ENCODE measurements at regions of chr19 and their contacts with region 1.

Region 1: DNA sequence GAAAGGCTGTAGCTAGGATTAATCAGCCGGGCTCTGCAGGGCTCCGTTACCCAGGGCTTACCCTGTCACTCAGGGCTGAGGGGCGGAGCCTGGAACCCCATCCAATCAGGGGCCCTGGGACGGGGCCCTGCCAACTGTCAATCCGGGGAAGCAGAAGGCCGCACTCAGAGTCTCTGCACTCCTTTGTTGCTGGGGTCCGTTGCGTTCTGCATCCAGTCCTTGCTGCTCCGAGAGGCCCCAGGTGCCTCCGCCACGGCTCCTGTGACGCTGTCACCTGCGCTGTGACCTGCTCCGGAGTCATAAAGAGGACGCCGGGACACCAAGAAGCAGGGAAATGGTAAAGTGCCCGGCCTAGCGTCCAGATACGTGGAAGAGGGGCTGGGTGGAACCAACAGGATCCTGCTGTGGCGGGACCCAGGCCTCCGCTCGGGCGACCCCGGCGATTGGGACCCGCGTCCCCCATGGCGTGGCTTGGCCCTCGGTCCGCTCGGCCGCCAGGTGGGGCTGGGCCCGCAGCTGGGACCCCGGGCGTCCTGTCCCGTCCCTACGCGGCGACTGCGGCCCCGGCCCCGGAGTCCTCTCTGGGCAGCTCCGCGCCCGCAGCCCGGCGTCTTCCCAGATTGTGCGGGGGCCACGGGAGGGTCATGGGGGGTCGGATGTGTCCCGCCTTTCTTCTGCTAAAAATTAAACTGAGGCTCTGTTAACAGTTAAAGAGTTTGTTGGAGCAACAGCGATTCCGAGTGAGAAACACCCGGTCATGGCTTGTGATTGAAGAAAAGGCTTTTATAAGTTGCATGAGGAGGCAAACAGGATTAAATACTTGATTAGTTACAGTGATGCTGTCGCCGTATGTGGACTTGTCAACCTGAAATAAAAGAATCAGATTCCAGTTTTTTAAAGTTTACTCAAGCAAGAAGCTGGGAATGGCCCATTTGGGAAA is at the start of gene ZNF491:
- DNase-seq: peak; percentile 65 to 90 (median 81)
- ATAC-seq: peak; percentile 96 to 99 (median 98)
- H3K4me3 ChIP-seq: peak within 1 kb of the TSS; percentile 71
- H3K4me3 Mint-ChIP-seq: peak within 1 kb of the TSS; percentile 87 to 92 (median 89)
- H3K27ac ChIP-seq: peak within 1 kb of the TSS; percentile 62
- H3K27ac Mint-ChIP-seq: peak within 1 kb of the TSS; percentile 85 to 90
- H3K4me1 ChIP-seq: peaks cover 8 to 18% of the 10 kb centered on the region in 2 experiments
- H3K4me1 Mint-ChIP-seq: peaks cover 18 to 21% (median 19%) of the 10 kb centered on the region in 3 donors
- H3K27me3 ChIP-seq: peaks cover 0 to 3% of the 10 kb centered on the region in 2 experiments
- H3K27me3 Mint-ChIP-seq: no peaks in the 10 kb centered on the region
- total RNA-seq, gene ZNF491: 0.77 to 3.5 (median 2.3) TPM

Region 2: GRCh38 chr19:11361771-11362731 is 436.6 kb before region 1 on chr19:
- CTCF ChIA-PET with region 1: no interaction called
- POLR2A ChIA-PET with region 1: no interaction called
- DNase-seq: no peak
- ATAC-seq: peak in 1 of 4 experiments; percentile 13
- H3K4me3 ChIP-seq: no peak overlapping the region
- H3K4me3 Mint-ChIP-seq: no peak overlapping the region
- H3K27ac ChIP-seq: no peak overlapping the region
- H3K27ac Mint-ChIP-seq: no peak overlapping the region
- H3K4me1 ChIP-seq: no peaks in the 10 kb centered on the region
- H3K4me1 Mint-ChIP-seq: no peaks in the 10 kb centered on the region
- H3K27me3 ChIP-seq: no peaks in the 10 kb centered on the region
- H3K27me3 Mint-ChIP-seq: no peaks in the 10 kb centered on the region

Region 3: DNA sequence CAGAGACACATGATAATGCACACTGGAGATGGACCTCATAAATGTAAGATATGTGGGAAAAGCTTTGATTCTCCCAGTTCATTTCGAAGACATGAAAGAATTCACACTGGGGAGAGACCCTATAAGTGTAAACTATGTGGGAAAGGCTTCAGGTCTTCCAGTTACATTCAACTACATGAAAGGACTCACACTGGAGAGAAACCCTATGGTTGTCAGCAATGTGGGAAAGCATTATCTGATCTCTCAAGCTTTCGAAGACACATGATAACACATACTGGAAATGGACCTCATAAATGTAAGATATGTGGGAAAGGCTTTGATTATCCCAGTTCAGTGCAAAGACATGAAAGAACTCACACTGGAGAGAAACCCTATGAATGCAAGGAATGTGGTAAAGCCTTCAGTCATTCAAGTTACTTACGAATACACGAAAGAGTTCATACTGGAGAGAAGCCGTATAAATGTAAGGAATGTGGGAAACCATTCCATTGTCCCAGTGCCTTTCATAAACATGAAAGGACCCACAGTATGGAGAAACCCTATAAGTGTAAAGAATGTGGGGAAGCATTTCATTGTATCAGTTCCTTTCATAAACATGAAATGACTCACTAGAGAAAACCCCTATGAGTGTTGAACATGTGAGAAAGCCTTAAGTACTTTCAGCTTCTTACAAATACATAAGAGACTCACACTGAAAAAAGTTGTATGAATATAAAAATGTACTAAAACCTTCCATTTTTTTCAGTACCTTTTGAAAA is 17.2 kb before region 1 on chr19:
- CTCF ChIA-PET with region 1: no interaction called
- POLR2A ChIA-PET with region 1: no interaction called
- DNase-seq: no peak
- ATAC-seq: no peak
- H3K4me3 ChIP-seq: no peak overlapping the region
- H3K4me3 Mint-ChIP-seq: no peak overlapping the region
- H3K27ac ChIP-seq: no peak overlapping the region
- H3K27ac Mint-ChIP-seq: no peak overlapping the region
- H3K4me1 ChIP-seq: no peaks in the 10 kb centered on the region
- H3K4me1 Mint-ChIP-seq: no peaks in the 10 kb centered on the region
- H3K27me3 ChIP-seq: no peaks in the 10 kb centered on the region
- H3K27me3 Mint-ChIP-seq: no peaks in the 10 kb centered on the region

Region 4: GRCh38 chr19:11814029-11814699 is 15.5 kb after region 1 on chr19 and contains the start of gene ZNF440:
- CTCF ChIA-PET with region 1: interaction called, 3 to 18 read pairs
- POLR2A ChIA-PET with region 1: no interaction called
- DNase-seq: peak; percentile 39 to 86 (median 72)
- ATAC-seq: peak; percentile 98 to 99 (median 99)
- H3K4me3 ChIP-seq: peak within 1 kb of the TSS; percentile 68 to 97
- H3K4me3 Mint-ChIP-seq: peak within 1 kb of the TSS; percentile 90 to 93 (median 90)
- H3K27ac ChIP-seq: peak within 1 kb of the TSS; percentile 54
- H3K27ac Mint-ChIP-seq: peak within 1 kb of the TSS; percentile 68 to 82
- H3K4me1 ChIP-seq: peaks cover 0 to 20% of the 10 kb centered on the region in 2 experiments
- H3K4me1 Mint-ChIP-seq: peaks cover 26 to 38% (median 31%) of the 10 kb centered on the region in 3 donors
- H3K27me3 ChIP-seq: no peaks in the 10 kb centered on the region
- H3K27me3 Mint-ChIP-seq: no peaks in the 10 kb centered on the region
- total RNA-seq, gene ZNF440: 6.3 to 19.8 (median 17.7) TPM

Region 5: DNA sequence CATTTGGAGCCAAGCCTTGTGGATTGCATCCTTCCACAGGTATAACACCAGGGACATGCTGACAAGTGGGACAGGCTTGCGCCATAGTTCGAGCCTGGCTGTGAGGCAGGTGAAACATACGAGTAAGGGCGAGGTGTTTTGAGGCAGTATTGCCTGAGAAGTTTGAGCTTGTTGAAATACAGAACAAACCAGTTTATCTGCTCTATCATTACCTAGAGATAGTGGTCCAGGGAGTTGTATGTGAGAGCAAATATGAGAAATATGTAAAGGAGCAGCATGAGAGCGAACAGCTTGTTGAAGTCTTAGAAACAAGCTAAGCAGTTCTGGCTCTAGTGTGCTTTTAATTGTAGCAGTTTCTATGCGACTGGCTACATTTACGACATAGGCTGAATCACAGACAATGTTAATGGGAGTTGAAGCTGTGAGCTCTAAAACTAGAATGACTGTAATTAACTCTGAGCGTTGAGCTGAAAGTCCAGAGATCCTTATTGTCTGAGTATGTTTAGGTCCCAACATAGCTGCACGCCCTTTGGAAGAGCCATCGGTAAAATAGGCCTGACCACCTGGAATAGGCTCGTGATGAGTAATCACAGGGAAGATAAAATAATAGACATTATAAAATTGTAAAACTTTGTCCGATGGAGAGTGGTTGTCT is 58.1 kb after region 1 on chr19:
- CTCF ChIA-PET with region 1: no interaction called
- POLR2A ChIA-PET with region 1: no interaction called
- DNase-seq: no peak
- ATAC-seq: no peak
- H3K4me3 ChIP-seq: no peak overlapping the region
- H3K4me3 Mint-ChIP-seq: no peak overlapping the region
- H3K27ac ChIP-seq: no peak overlapping the region
- H3K27ac Mint-ChIP-seq: no peak overlapping the region
- H3K4me1 ChIP-seq: no peaks in the 10 kb centered on the region
- H3K4me1 Mint-ChIP-seq: peaks cover 0 to 12% (median 5%) of the 10 kb centered on the region in 3 donors
- H3K27me3 ChIP-seq: no peaks in the 10 kb centered on the region
- H3K27me3 Mint-ChIP-seq: no peaks in the 10 kb centered on the region

Region 6: DNA sequence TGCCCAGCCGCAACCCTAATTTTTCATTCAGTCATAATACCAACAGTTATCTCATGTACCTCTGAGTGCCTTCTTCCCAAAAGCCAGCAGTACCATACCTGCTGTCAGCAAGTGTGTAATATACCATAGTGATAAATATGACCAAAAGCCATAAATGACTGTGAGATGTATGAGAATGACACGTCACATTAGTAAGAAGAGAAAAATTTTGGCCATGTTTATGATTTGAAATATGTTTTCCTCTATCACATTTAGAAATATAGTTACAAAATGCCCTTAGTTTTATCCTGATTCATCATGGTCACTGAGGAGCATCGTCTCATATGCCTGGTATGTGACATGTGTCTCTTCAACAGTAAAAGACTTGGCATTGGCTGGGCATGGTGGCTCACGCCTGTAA is 115.0 kb after region 1 on chr19:
- CTCF ChIA-PET with region 1: no interaction called
- POLR2A ChIA-PET with region 1: no interaction called
- DNase-seq: no peak
- ATAC-seq: no peak
- H3K4me3 ChIP-seq: no peak overlapping the region
- H3K4me3 Mint-ChIP-seq: no peak overlapping the region
- H3K27ac ChIP-seq: no peak overlapping the region
- H3K27ac Mint-ChIP-seq: no peak overlapping the region
- H3K4me1 ChIP-seq: no peaks in the 10 kb centered on the region
- H3K4me1 Mint-ChIP-seq: no peaks in the 10 kb centered on the region
- H3K27me3 ChIP-seq: peaks cover 0 to 2% of the 10 kb centered on the region in 2 experiments
- H3K27me3 Mint-ChIP-seq: no peaks in the 10 kb centered on the region

Region 7: DNA sequence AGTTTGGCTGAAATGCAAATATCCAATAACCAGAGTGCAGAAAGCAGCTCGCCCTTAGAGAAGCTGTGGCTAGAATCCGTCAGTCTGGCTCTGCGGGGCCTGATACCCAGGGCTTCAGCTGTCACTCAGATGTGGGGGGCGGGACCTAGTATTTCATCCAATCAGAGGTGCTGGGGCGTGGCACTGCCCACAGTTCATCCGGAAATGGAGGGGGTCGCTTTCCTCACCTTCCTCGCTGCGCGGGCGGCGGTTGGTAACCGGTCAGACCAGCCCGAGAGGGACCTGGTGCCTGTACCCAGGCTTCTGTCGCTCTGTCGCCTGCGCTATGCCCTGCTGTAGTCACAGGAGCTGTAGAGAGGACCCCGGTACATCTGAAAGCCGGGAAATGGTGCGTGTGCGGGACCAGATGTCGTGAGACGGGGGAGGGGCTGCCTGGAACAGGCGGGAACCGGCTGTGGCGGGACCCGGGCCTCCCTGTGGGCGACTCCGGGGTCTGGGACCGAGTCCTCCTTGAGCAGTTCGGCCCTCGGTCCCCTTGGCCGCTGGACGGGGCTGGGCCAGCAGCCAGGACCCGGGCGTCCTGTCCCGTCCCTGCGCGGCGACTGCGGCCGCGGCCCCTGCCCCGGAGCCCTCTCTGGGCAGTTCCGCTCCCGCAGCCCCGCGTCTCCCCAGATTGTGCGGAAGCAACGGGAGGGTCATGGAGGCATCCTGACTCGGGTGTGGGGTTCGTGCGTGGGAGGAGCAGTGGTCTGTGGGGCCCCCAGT is 126.4 kb after region 1 on chr19 and contains the start of gene ZNF700:
- CTCF ChIA-PET with region 1: interaction called in 1 of 2 experiments, 19 read pairs
- POLR2A ChIA-PET with region 1: no interaction called
- DNase-seq: peak; percentile 76 to 95 (median 90)
- ATAC-seq: peak; percentile 89 to 94 (median 91)
- H3K4me3 ChIP-seq: peak within 1 kb of the TSS; percentile 83 to 98
- H3K4me3 Mint-ChIP-seq: peak within 1 kb of the TSS; percentile 98
- H3K27ac ChIP-seq: peak within 1 kb of the TSS; percentile 94
- H3K27ac Mint-ChIP-seq: peak within 1 kb of the TSS; percentile 95 to 99
- H3K4me1 ChIP-seq: peaks cover 11 to 34% of the 10 kb centered on the region in 2 experiments
- H3K4me1 Mint-ChIP-seq: peaks cover 47 to 49% (median 48%) of the 10 kb centered on the region in 3 donors
- H3K27me3 ChIP-seq: no peaks in the 10 kb centered on the region
- H3K27me3 Mint-ChIP-seq: no peaks in the 10 kb centered on the region
- total RNA-seq, gene ZNF700: 17.2 to 19.7 (median 18.4) TPM

Region 8: DNA sequence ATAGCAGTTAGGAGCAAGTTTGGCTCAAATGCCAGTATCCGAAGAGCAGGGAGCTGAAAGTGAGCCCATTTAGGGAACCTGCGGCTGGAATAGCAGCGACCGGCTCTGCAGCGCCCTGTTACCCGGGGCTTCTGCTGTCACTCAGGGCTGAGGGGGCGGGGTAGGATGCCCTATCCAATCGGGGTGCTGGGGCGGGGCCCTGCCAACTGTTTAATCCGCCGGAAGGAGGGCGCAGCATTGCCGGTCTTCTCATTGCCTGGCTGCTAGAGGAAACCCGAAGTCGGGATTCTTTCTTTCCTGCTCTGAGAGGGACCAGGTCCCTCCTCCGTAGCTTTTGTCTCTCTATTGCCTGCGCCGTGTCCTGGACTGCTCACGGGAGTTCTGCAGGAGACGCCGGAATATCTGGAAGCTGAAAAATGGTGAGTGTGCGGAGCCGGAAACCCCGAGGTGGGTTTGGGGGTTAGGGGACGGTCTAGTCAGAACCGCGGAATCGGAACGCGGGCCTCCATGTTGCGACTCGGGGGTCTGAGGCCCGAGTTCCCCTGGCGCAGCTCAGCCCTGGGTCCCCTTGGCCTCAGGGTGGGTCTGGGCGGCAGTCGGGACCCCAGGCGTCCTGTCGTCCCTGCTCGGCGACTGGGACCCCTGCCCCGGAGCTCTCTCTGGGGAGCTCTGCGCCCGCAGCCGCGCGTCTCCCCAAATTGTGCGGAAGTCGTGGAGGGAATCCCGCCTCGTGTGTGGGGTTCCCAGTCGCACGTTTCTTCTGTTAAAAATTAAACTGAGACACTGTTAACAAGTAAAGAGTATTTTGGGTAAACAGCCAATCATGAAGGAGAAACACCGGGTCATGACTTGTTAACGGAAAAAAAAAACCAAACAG is 189.0 kb after region 1 on chr19:
- CTCF ChIA-PET with region 1: interaction called, 6 to 22 read pairs
- POLR2A ChIA-PET with region 1: interaction called in 1 of 2 experiments, 4 read pairs
- DNase-seq: peak; percentile 78 to 95 (median 90)
- ATAC-seq: peak; percentile 89 to 94 (median 94)
- H3K4me3 ChIP-seq: peak overlapping the region; percentile 91 to 96
- H3K4me3 Mint-ChIP-seq: peak overlapping the region; percentile 93 to 99 (median 97)
- H3K27ac ChIP-seq: peak overlapping the region; percentile 84
- H3K27ac Mint-ChIP-seq: peak overlapping the region; percentile 94 to 97
- H3K4me1 ChIP-seq: peaks cover 6 to 21% of the 10 kb centered on the region in 2 experiments
- H3K4me1 Mint-ChIP-seq: peaks cover 27 to 38% (median 34%) of the 10 kb centered on the region in 3 donors
- H3K27me3 ChIP-seq: no peaks in the 10 kb centered on the region
- H3K27me3 Mint-ChIP-seq: no peaks in the 10 kb centered on the region

Region 9: DNA sequence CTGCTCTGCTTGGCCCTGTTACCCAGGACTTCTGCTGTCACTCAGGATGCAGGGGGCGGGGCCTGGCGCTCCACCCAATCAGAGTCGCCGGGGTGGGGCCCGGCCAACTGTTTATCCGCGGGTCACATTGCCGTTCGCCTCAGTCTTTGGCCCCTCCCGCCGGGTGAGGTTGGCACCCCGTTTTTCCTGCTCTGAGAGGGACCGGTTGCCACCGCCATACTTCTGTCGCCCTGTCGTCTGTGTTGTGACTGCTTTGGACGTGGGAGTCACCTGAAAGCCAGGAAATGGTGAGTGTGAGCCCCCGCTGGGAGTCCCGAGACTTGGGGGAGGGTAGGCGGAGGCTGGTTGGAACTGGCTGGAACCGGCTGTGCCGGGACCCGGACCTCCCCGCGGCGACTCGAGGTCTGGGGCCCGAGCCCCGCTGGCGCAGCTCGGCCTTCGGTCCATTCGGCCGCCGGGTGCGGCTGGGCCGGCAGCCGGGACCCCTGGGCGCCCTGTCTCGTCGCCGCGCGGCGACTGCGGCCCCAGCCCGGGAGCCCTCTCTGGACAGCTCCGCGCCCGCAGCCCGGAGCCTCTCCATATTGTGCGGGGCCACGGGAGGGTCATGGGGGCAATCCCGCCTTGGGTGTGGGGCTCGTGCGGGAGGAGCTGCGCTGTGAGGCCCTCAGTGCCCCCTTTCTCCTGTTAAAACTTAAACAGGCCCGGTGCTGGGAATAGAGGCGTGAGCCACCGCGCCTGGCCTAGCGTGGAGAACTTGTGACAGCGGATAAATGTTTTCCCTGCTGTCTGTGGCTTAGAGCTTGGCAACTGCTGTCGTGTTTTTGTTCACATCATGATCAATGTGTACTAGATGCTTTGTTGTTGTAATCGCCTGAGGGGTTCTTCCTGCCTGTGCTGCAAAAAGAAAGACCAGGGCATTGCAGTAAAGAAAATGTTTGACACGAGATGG is 266.2 kb after region 1 on chr19 and contains the start of gene ZNF844:
- CTCF ChIA-PET with region 1: interaction called in 1 of 2 experiments, 10 read pairs
- POLR2A ChIA-PET with region 1: no interaction called
- DNase-seq: peak; percentile 27 to 78 (median 60)
- ATAC-seq: peak; percentile 79 to 91 (median 88)
- H3K4me3 ChIP-seq: peak within 1 kb of the TSS; percentile 84 to 94
- H3K4me3 Mint-ChIP-seq: peak within 1 kb of the TSS; percentile 80 to 89 (median 83)
- H3K27ac ChIP-seq: peak within 1 kb of the TSS; percentile 81
- H3K27ac Mint-ChIP-seq: peak within 1 kb of the TSS; percentile 60 to 78
- H3K4me1 ChIP-seq: peaks cover 0 to 18% of the 10 kb centered on the region in 2 experiments
- H3K4me1 Mint-ChIP-seq: peaks cover 0 to 13% (median 11%) of the 10 kb centered on the region in 3 donors
- H3K27me3 ChIP-seq: no peaks in the 10 kb centered on the region
- H3K27me3 Mint-ChIP-seq: no peaks in the 10 kb centered on the region
- total RNA-seq, gene ZNF844: 9.2 to 20.7 (median 11.5) TPM

Region 10: GRCh38 chr19:12139885-12140547 is 341.4 kb after region 1 on chr19 and contains the start of gene ZNF20:
- CTCF ChIA-PET with region 1: interaction called in 1 of 2 experiments, 12 read pairs
- POLR2A ChIA-PET with region 1: no interaction called
- DNase-seq: peak; percentile 62 to 89 (median 79)
- ATAC-seq: peak; percentile 90 to 96 (median 94)
- H3K4me3 ChIP-seq: peak within 1 kb of the TSS; percentile 70 to 95
- H3K4me3 Mint-ChIP-seq: peak within 1 kb of the TSS; percentile 91 to 93 (median 91)
- H3K27ac ChIP-seq: peak within 1 kb of the TSS; percentile 54
- H3K27ac Mint-ChIP-seq: peak within 1 kb of the TSS; percentile 41 to 63
- H3K4me1 ChIP-seq: peaks cover 10 to 23% of the 10 kb centered on the region in 2 experiments
- H3K4me1 Mint-ChIP-seq: peaks cover 36 to 37% (median 36%) of the 10 kb centered on the region in 3 donors
- H3K27me3 ChIP-seq: no peaks in the 10 kb centered on the region
- H3K27me3 Mint-ChIP-seq: no peaks in the 10 kb centered on the region
- total RNA-seq, gene ZNF20: 2.2 to 8.8 (median 6.0) TPM in 4 of 5 donors, not detected in the other